Activated CD8-positive, alpha-beta T cell treated with anti-CD3 and anti-CD28 coated beads for 36 hours (primary cell): ENCODE measurements at regions of chr3 and their contacts with region 1.

Region 1: GRCh38 chr3:187919048-187919447 is 173.8 kb upstream of the BCL6 start:
- DNase-seq: peak; percentile 79
- ATAC-seq: peak; percentile 62
- H3K4me3 Mint-ChIP-seq: peak overlapping the region; percentile 60
- H3K27ac Mint-ChIP-seq: peak overlapping the region; percentile 93
- H3K4me1 Mint-ChIP-seq: peaks cover 70% of the 10 kb centered on the region
- H3K27me3 Mint-ChIP-seq: no peaks in the 10 kb centered on the region
- CTCF ChIP-seq: no peak

Region 2: GRCh38 chr3:187802928-187803259 is 116.2 kb before region 1 on chr3:
- CTCF ChIA-PET with region 1: interaction called, 5 read pairs
- POLR2A ChIA-PET with region 1: interaction called, 3 read pairs
- intact Hi-C with region 1: loop called (anchors 2 kb)
- DNase-seq: peak; percentile 86
- ATAC-seq: peak; percentile 48
- H3K4me3 Mint-ChIP-seq: peak overlapping the region; percentile 52
- H3K27ac Mint-ChIP-seq: peak overlapping the region; percentile 92
- H3K4me1 Mint-ChIP-seq: peaks cover 93% of the 10 kb centered on the region
- H3K27me3 Mint-ChIP-seq: no peaks in the 10 kb centered on the region
- CTCF ChIP-seq: no peak

Region 3: GRCh38 chr3:187870360-187871203 is 48.5 kb before region 1 on chr3:
- CTCF ChIA-PET with region 1: no interaction called
- POLR2A ChIA-PET with region 1: no interaction called
- intact Hi-C with region 1: no loop called
- DNase-seq: peak; percentile 42
- ATAC-seq: peak; percentile 86
- H3K4me3 Mint-ChIP-seq: peak overlapping the region; percentile 14
- H3K27ac Mint-ChIP-seq: peak overlapping the region; percentile 80
- H3K4me1 Mint-ChIP-seq: peaks cover 18% of the 10 kb centered on the region
- H3K27me3 Mint-ChIP-seq: no peaks in the 10 kb centered on the region
- CTCF ChIP-seq: no peak

Region 4: GRCh38 chr3:187963677-187964385 is 44.8 kb after region 1 on chr3:
- CTCF ChIA-PET with region 1: no interaction called
- POLR2A ChIA-PET with region 1: no interaction called
- intact Hi-C with region 1: loop called (anchors 5 kb)
- DNase-seq: no peak
- ATAC-seq: peak; percentile 32
- H3K4me3 Mint-ChIP-seq: no peak overlapping the region
- H3K27ac Mint-ChIP-seq: no peak overlapping the region
- H3K4me1 Mint-ChIP-seq: peaks cover 16% of the 10 kb centered on the region
- H3K27me3 Mint-ChIP-seq: no peaks in the 10 kb centered on the region
- CTCF ChIP-seq: no peak

Region 5: GRCh38 chr3:187974871-187975271 is 55.8 kb after region 1 on chr3:
- CTCF ChIA-PET with region 1: interaction called, 3 read pairs
- POLR2A ChIA-PET with region 1: no interaction called
- intact Hi-C with region 1: loop called (anchors 5 kb)
- DNase-seq: no peak
- ATAC-seq: peak; percentile 48
- H3K4me3 Mint-ChIP-seq: peak overlapping the region; percentile 30
- H3K27ac Mint-ChIP-seq: peak overlapping the region; percentile 86
- H3K4me1 Mint-ChIP-seq: peaks cover 52% of the 10 kb centered on the region
- H3K27me3 Mint-ChIP-seq: no peaks in the 10 kb centered on the region
- CTCF ChIP-seq: no peak

Region 6: DNA sequence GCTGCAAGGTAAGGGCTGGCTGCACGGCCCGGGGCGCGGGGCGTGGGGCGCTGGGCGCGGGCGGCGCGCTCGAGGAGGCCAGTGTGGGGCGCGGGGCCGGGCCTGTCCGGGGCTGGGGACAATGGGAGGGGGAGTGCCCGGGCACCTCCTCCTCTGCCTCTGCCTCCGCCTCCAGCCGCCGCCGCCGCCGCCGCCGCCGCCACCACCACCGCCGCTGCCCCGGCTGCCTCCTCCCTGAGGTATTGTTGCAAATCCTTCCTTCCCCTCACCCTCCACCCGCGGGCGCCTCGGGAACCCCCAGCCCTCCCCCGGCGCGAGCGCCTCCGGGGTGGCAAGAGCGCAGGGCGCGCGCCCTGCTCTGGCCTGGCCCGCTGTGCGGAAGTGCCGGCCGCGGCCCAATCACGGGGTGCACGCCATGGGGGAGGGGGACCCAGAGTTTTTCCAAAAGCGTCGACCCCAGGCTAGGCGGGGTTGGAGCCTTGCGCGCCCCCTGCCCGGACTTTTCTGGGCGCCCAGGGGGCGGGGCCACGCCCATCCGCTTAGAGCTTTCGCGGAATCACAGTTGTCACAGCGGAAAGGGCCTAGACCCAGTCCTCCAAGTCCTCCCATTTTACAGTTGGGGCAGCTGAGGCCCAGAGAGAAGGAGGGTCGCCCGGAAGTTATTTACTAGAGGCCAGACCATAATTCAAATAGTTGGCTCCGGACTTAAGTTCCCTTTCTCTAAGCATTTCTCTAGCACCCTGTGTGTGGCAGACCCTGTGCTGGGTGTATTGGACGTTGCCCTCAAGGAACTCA is 235.2 kb after region 1 on chr3 and contains the start of gene LPP:
- CTCF ChIA-PET with region 1: no interaction called
- POLR2A ChIA-PET with region 1: interaction called, 4 read pairs
- intact Hi-C with region 1: loop called (anchors 10 kb)
- DNase-seq: peak; percentile 87
- ATAC-seq: peak; percentile 83
- H3K4me3 Mint-ChIP-seq: peak within 1 kb of the TSS; percentile 75
- H3K27ac Mint-ChIP-seq: peak within 1 kb of the TSS; percentile 92
- H3K4me1 Mint-ChIP-seq: peaks cover 57% of the 10 kb centered on the region
- H3K27me3 Mint-ChIP-seq: no peaks in the 10 kb centered on the region
- CTCF ChIP-seq: no peak
- total RNA-seq, gene LPP: 16.4 to 22.6 TPM